CD8-positive, alpha-beta memory T cell (primary cell): ENCODE measurements at regions of chr3 and their contacts with region 1.

Region 1: GRCh38 chr3:14178247-14179113 is at the starts of genes LSM3 and XPC:
- DNase-seq: peak; percentile 96 to 100 (median 98)
- H3K4me3 ChIP-seq: peak within 1 kb of the TSS; percentile 79
- H3K4me3 Mint-ChIP-seq: peak within 1 kb of the TSS; percentile 92 to 100 (median 98)
- H3K27ac ChIP-seq: peak within 1 kb of the TSS; percentile 96
- H3K27ac Mint-ChIP-seq: peak within 1 kb of the TSS; percentile 94 to 100 (median 99)
- H3K4me1 ChIP-seq: peaks cover 44% of the 10 kb centered on the region
- H3K4me1 Mint-ChIP-seq: peaks cover 58 to 82% (median 79%) of the 10 kb centered on the region in 3 donors
- H3K27me3 ChIP-seq: no peaks in the 10 kb centered on the region
- H3K27me3 Mint-ChIP-seq: peaks cover 0 to 2% of the 10 kb centered on the region in 2 donors
- total RNA-seq, gene LSM3: 25.8 to 26.6 TPM
- total RNA-seq, gene XPC: 38.8 to 38.9 TPM

Region 2: DNA sequence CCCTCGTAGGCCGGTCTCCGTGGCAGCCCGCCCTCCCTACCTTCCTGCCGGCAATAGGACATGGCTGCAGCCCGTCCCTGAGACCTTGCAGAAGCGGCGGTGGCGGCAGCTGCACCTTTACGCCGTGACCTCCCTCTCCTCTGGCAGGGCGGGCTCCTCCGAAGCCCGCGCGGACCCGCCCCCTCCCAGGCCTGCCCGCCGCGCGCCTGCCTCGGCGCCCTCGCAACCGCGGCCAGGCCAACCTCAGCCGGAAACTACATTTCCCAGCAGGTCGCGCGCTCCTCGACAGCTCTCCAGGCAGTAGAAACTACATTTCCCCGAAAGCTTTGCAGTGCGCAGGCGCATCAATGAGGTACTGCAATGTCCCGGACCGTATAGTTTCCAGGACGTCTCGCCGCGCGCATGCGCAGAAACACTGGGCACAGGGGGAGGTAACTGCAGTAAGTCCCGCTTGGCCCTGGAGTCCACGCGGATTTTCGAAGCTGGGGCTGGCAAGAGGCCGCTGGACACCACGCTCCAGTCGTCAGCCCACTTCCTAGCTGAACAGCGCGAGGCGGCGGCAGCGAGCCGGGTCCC is 53.8 kb before region 1 on chr3 and contains the starts of genes CHCHD4 and TMEM43:
- CTCF ChIA-PET with region 1: interaction called, 30 read pairs
- POLR2A ChIA-PET with region 1: interaction called, 78 read pairs
- DNase-seq: peak; percentile 97 to 100 (median 98)
- H3K4me3 ChIP-seq: peak within 1 kb of the TSS; percentile 99
- H3K4me3 Mint-ChIP-seq: peak within 1 kb of the TSS; percentile 93 to 99 (median 97)
- H3K27ac ChIP-seq: peak within 1 kb of the TSS; percentile 94
- H3K27ac Mint-ChIP-seq: peak within 1 kb of the TSS; percentile 95 to 99 (median 98)
- H3K4me1 ChIP-seq: peaks cover 34% of the 10 kb centered on the region
- H3K4me1 Mint-ChIP-seq: peaks cover 54 to 73% (median 65%) of the 10 kb centered on the region in 3 donors
- H3K27me3 ChIP-seq: no peaks in the 10 kb centered on the region
- H3K27me3 Mint-ChIP-seq: peaks cover 0 to 5% of the 10 kb centered on the region in 2 donors
- total RNA-seq, gene CHCHD4: 21.7 to 21.8 TPM
- total RNA-seq, gene TMEM43: 48.8 to 49.4 TPM

Region 3: GRCh38 chr3:14144423-14145075 is 33.9 kb before region 1 on chr3:
- CTCF ChIA-PET with region 1: interaction called, 24 read pairs
- POLR2A ChIA-PET with region 1: interaction called, 22 read pairs
- DNase-seq: peak; percentile 66 to 94 (median 86)
- H3K4me3 ChIP-seq: peak overlapping the region; percentile 10
- H3K4me3 Mint-ChIP-seq: peak overlapping the region; percentile 57 to 91 (median 83)
- H3K27ac ChIP-seq: peak overlapping the region; percentile 94
- H3K27ac Mint-ChIP-seq: peak overlapping the region; percentile 98 to 100 (median 100)
- H3K4me1 ChIP-seq: peaks cover 55% of the 10 kb centered on the region
- H3K4me1 Mint-ChIP-seq: peaks cover 56 to 66% (median 65%) of the 10 kb centered on the region in 3 donors
- H3K27me3 ChIP-seq: no peaks in the 10 kb centered on the region
- H3K27me3 Mint-ChIP-seq: peaks cover 0 to 4% of the 10 kb centered on the region in 2 donors

Region 4: GRCh38 chr3:14297784-14298236 is 119.3 kb after region 1 on chr3:
- CTCF ChIA-PET with region 1: no interaction called
- POLR2A ChIA-PET with region 1: no interaction called
- DNase-seq: no peak
- H3K4me3 ChIP-seq: no peak overlapping the region
- H3K4me3 Mint-ChIP-seq: no peak overlapping the region
- H3K27ac ChIP-seq: no peak overlapping the region
- H3K27ac Mint-ChIP-seq: no peak overlapping the region
- H3K4me1 ChIP-seq: no peaks in the 10 kb centered on the region
- H3K4me1 Mint-ChIP-seq: peaks cover 5 to 6% (median 6%) of the 10 kb centered on the region in 3 donors
- H3K27me3 ChIP-seq: no peaks in the 10 kb centered on the region
- H3K27me3 Mint-ChIP-seq: peaks cover 0 to 15% of the 10 kb centered on the region in 2 donors

Region 5: DNA sequence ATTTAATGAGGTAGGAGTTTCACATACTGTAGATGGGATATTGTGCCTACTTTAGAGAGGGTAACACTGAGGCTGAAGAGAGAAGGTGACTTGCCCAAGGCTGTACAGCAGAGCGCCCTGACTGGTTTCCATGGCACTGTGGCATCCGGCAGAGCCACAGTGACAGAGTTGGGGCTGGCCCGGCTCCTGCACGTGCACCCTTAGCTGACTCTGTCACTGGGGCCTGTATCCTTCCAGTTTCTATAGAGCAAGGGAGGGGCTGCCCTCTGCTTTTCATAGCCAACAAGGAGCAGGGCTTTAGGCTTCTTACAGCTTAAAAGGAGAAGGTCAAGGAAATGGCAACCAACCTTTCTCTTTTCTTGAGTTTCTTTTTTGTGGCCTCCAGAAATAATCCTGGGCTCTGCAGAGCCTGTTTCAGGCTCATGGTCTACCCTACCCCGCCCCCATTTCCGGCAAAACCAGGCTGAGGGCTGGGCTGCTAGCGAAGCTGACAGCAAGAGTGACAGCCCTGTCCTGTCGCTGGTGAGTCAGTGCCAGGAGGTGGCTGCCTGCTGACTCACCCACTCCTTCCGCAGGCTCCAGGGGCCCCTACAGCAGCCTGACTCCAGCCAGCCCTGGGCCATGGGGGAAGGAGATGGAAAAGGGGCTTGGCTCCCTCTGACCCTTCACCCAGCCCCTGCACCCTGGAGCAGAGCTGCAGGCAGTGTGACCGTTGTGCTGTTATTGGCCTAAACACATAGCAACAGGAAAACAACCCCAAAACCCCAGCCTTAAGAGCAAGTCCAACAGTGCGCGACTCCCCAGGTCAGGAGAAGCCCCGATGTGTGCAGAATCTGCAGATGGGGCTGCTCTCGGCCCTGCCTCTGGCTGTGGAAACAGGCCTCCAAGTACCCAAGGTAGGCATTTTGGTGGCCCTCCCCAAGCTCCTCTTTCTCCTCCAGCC is 253.7 kb after region 1 on chr3:
- CTCF ChIA-PET with region 1: interaction called, 5 read pairs
- POLR2A ChIA-PET with region 1: interaction called, 12 read pairs
- DNase-seq: peak; percentile 91 to 98 (median 92)
- H3K4me3 ChIP-seq: peak overlapping the region; percentile 57
- H3K4me3 Mint-ChIP-seq: peak overlapping the region; percentile 68 to 91 (median 83)
- H3K27ac ChIP-seq: peak overlapping the region; percentile 93
- H3K27ac Mint-ChIP-seq: peak overlapping the region; percentile 97 to 100 (median 100)
- H3K4me1 ChIP-seq: peaks cover 92% of the 10 kb centered on the region
- H3K4me1 Mint-ChIP-seq: peaks cover 87 to 98% (median 91%) of the 10 kb centered on the region in 3 donors
- H3K27me3 ChIP-seq: no peaks in the 10 kb centered on the region
- H3K27me3 Mint-ChIP-seq: peaks cover 0 to 3% of the 10 kb centered on the region in 2 donors

Region 6: DNA sequence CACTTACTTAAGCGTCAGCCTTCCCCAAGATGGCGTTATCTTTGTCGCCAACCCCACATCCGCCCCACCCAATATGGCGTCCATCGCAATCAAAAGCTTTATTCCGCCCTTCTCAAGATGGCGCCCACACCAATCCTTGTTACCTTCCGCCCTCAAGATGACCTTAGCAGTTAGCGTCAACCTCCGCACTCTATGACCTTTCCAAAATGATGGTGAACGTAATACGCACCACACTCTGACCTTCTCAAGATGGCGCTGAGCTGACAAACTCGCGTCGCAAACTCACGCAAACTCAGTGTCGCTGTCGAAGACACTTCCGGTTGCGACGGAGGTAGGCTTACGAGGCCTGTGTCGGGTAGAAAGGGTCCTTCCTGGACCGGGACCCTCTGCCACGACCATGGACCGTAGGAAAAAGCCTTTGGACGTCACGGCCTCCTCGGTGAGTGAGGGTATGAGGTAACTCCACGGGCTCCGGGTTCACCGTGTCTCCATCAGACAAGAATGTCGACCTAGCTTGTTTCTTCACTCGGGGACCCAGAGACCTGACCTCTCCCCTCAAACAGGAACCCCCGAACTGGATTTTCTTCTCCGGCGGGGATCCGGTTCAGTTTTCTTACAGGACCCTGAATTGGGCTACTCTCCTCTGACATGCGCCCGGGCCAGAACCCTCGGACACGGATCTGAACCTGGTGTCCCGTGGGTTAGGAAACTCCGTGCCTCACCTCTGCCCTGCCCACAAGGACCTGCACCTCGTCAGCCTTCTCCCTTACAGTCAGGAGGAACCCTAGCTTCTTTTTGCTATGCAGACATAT is 473.2 kb after region 1 on chr3 and contains the start of gene CCDC174:
- CTCF ChIA-PET with region 1: no interaction called
- POLR2A ChIA-PET with region 1: interaction called, 30 read pairs
- DNase-seq: peak; percentile 87 to 97 (median 96)
- H3K4me3 ChIP-seq: peak within 1 kb of the TSS; percentile 82
- H3K4me3 Mint-ChIP-seq: peak within 1 kb of the TSS; percentile 80 to 98 (median 94)
- H3K27ac ChIP-seq: peak within 1 kb of the TSS; percentile 97
- H3K27ac Mint-ChIP-seq: peak within 1 kb of the TSS; percentile 64 to 100 (median 99)
- H3K4me1 ChIP-seq: peaks cover 33% of the 10 kb centered on the region
- H3K4me1 Mint-ChIP-seq: peaks cover 39 to 64% (median 52%) of the 10 kb centered on the region in 3 donors
- H3K27me3 ChIP-seq: no peaks in the 10 kb centered on the region
- H3K27me3 Mint-ChIP-seq: no peaks in the 10 kb centered on the region
- total RNA-seq, gene CCDC174: 16.8 to 18.2 TPM